GM12878 (cell line): ENCODE measurements at regions of chr7 and their contacts with region 1.

Region 1: DNA sequence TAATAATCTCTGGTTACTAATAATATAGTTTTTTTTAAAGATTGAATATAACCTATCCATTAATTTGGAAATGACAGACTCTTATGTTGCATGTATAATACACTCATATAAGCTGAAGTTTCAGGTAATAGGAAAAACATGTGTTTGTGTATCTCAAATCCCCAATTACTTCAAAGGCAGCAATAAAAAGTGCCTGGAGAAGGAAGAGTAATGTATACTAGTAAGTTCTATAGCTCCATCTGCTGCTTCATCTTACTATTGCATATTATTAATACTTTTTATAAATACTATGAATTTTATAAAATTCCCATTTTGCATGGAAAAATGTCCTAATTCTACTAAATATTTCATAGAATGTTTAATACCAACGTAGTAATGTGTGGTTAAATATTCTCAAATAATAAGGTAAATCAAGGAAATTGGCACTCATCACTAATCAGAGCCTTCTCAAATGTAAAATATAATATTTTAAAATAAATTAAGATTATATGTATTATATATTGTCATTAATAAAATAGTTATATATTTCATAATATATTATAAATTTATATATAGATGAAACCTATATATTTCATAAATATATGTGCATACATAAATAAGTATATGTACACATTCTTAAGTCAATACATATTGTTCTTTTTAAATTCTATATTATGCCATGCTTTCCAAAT is 311.9 kb downstream of the HGF start:
- DNase-seq: no peak
- ATAC-seq: no peak
- H3K4me3 ChIP-seq: no peak overlapping the region
- H3K27ac ChIP-seq: no peak overlapping the region
- H3K4me1 ChIP-seq: no peaks in the 10 kb centered on the region
- H3K27me3 ChIP-seq: no peaks in the 10 kb centered on the region
- CTCF ChIP-seq: no peak; a peak in 1 of 6 replicates
- EP300 ChIP-seq: no peak
- POLR2A ChIP-seq: no peak
- RAD21 ChIP-seq: no peak

Region 2: GRCh38 chr7:80699045-80699638 is 758.8 kb before region 1 on chr7:
- CTCF ChIA-PET with region 1: interaction called, 7 read pairs
- POLR2A ChIA-PET with region 1: no interaction called
- RAD21 ChIA-PET with region 1: interaction called, 3 read pairs
- SMC1A ChIA-PET with region 1: no interaction called
- in situ Hi-C with region 1: loop called (anchors 5 kb)
- intact Hi-C with region 1: no loop called
- DNase-seq: no peak
- ATAC-seq: peak; percentile 74
- H3K4me3 ChIP-seq: no peak overlapping the region
- H3K27ac ChIP-seq: no peak overlapping the region
- H3K4me1 ChIP-seq: no peaks in the 10 kb centered on the region
- H3K27me3 ChIP-seq: no peaks in the 10 kb centered on the region
- CTCF ChIP-seq: peak; percentile 36 to 71 (median 51); a peak in 5 of 6 replicates
- EP300 ChIP-seq: no peak
- POLR2A ChIP-seq: no peak
- RAD21 ChIP-seq: peak; percentile 85

Region 3: GRCh38 chr7:81367335-81367931 is 90.6 kb before region 1 on chr7:
- CTCF ChIA-PET with region 1: no interaction called
- POLR2A ChIA-PET with region 1: no interaction called
- RAD21 ChIA-PET with region 1: no interaction called
- SMC1A ChIA-PET with region 1: no interaction called
- in situ Hi-C with region 1: no loop called
- intact Hi-C with region 1: no loop called
- DNase-seq: no peak
- ATAC-seq: no peak
- H3K4me3 ChIP-seq: no peak overlapping the region
- H3K27ac ChIP-seq: no peak overlapping the region
- H3K4me1 ChIP-seq: no peaks in the 10 kb centered on the region
- H3K27me3 ChIP-seq: no peaks in the 10 kb centered on the region
- CTCF ChIP-seq: no peak
- EP300 ChIP-seq: no peak
- POLR2A ChIP-seq: no peak
- RAD21 ChIP-seq: no peak

Region 4: GRCh38 chr7:81574723-81575326 is 116.8 kb after region 1 on chr7:
- CTCF ChIA-PET with region 1: no interaction called
- POLR2A ChIA-PET with region 1: no interaction called
- RAD21 ChIA-PET with region 1: no interaction called
- SMC1A ChIA-PET with region 1: no interaction called
- in situ Hi-C with region 1: no loop called
- intact Hi-C with region 1: no loop called
- DNase-seq: no peak
- ATAC-seq: no peak
- H3K4me3 ChIP-seq: no peak overlapping the region
- H3K27ac ChIP-seq: no peak overlapping the region
- H3K4me1 ChIP-seq: no peaks in the 10 kb centered on the region
- H3K27me3 ChIP-seq: no peaks in the 10 kb centered on the region
- CTCF ChIP-seq: no peak
- EP300 ChIP-seq: no peak
- POLR2A ChIP-seq: no peak
- RAD21 ChIP-seq: no peak